ENCODE measurements at regions of chr14 and their contacts with region 1.

Region 1: DNA sequence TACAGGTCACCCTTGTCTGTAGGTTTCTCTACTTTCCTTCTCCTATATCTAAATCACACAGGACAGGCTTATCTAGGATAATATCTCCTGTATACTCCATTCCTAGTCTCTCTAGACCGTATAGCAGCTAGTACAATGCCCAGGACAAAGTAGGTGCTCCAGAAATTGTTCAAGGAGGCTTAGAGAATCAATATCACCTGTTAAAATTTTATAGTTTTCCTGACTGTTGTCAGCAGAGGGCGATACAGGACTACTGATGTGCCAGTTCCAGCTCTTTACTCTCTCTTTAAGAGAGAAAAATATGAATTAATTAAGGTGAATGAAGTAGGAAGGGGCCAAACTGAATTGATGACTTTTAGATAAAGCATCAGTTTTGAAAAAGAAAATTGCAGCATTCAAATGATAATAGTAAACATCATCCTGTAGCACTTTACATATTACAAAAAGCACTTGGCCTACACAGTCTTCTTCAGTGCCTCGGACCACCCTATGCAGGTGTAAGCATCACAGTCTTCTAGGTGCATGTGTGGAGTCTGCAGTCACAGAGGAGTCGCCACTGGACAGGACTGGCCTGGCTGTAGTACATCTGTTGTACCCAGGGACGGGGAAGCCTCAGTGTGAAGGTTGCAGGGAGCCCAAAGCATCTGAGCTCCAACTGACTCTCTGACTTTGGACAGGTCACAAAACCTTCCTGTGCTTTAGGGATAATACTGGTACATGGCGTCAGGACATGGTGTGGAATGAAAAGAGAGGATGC is 61.9 kb upstream of the MAX start:
- DNase-seq: no peak
- H3K4me3 ChIP-seq: no peak overlapping the region
- H3K27ac ChIP-seq: no peak overlapping the region
- H3K4me1 ChIP-seq: no peaks in the 10 kb centered on the region
- H3K27me3 ChIP-seq: no peaks in the 10 kb centered on the region
- CTCF ChIP-seq: peak in 2 of 3 experiments; percentile 47 to 52; a peak in 2 of 4 replicates
- EP300 ChIP-seq: no peak
- POLR2A ChIP-seq: no peak
- RAD21 ChIP-seq: peak; percentile 88

Region 2: DNA sequence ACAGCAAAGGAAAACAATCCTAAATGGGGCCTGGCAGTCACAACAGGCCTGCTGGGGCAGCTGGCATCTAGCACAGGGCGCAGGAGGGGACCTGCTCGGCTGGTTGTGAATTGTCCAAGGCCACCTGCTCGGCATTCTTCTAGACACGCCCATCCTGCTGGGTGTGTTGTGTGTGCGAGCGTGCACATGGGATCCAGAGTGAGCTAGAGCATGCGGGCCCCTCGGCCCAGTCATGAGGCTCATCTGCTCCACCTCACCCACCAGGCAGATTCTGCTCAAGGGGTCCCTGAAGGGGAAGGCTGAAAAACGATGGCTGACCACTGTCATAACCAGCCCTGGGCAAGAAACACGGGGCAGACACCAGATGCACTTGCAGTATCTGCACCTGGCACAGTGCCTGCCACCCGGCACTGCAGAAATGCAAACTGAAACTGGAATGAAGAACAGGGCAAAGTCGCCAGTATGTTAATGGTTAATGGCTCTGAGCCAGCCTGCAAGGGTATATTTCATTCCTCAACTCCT is 93.7 kb before region 1 on chr14:
- CTCF ChIA-PET with region 1: no interaction called
- POLR2A ChIA-PET with region 1: no interaction called
- DNase-seq: no peak
- H3K4me3 ChIP-seq: no peak overlapping the region
- H3K27ac ChIP-seq: no peak overlapping the region
- H3K4me1 ChIP-seq: no peaks in the 10 kb centered on the region
- H3K27me3 ChIP-seq: no peaks in the 10 kb centered on the region
- CTCF ChIP-seq: no peak
- EP300 ChIP-seq: no peak
- POLR2A ChIP-seq: no peak
- RAD21 ChIP-seq: no peak

Region 3: DNA sequence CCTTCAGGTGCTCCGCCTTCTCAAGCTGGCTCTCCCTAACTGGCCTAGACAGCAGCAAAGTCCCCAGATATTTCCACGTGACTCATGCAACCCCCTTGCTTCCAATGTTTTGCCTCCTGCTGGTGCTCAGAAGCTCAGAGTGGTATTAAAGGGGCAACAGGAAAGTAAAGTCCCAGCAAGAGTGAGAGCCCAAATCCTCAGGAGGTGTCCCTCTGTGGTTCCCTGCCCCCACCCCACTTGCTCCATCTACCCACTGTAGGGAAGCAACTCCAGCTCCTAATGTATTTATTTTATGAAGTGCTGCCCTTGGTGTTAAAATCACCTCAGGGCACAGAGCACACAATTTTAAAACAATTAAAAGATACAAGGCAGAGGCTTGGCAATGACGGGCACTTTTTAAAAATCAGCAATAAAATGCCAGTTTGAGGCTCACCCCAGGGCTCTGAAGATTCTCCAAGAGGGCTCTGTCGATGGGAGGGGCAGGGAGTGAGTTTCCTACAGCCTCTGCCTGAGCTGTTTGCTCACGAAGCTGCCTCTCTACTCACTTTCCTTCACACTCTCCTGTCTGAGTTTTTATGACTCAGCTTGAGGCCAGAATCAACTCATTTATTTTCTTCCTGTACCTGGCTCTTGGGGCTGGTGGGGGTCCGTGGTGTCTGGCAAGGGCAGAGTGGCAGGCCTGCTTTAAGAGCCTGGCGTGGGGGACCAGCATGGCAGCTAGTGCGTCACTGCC is 20.0 kb after region 1 on chr14:
- CTCF ChIA-PET with region 1: interaction called, 14 read pairs
- POLR2A ChIA-PET with region 1: no interaction called
- DNase-seq: no peak
- H3K4me3 ChIP-seq: no peak overlapping the region
- H3K27ac ChIP-seq: no peak overlapping the region
- H3K4me1 ChIP-seq: peaks cover 3 to 20% (median 11%) of the 10 kb centered on the region in 4 experiments
- H3K27me3 ChIP-seq: no peaks in the 10 kb centered on the region; a peak in 2 of 7 replicates
- CTCF ChIP-seq: no peak
- EP300 ChIP-seq: no peak
- POLR2A ChIP-seq: no peak
- RAD21 ChIP-seq: no peak

Region 4: GRCh38 chr14:65396082-65396910 is 232.1 kb after region 1 on chr14:
- CTCF ChIA-PET with region 1: no interaction called
- POLR2A ChIA-PET with region 1: no interaction called
- DNase-seq: no peak
- H3K4me3 ChIP-seq: no peak overlapping the region
- H3K27ac ChIP-seq: no peak overlapping the region
- H3K4me1 ChIP-seq: no peaks in the 10 kb centered on the region
- H3K27me3 ChIP-seq: no peaks in the 10 kb centered on the region
- CTCF ChIP-seq: no peak
- EP300 ChIP-seq: no peak
- POLR2A ChIP-seq: no peak
- RAD21 ChIP-seq: no peak

Region 5: DNA sequence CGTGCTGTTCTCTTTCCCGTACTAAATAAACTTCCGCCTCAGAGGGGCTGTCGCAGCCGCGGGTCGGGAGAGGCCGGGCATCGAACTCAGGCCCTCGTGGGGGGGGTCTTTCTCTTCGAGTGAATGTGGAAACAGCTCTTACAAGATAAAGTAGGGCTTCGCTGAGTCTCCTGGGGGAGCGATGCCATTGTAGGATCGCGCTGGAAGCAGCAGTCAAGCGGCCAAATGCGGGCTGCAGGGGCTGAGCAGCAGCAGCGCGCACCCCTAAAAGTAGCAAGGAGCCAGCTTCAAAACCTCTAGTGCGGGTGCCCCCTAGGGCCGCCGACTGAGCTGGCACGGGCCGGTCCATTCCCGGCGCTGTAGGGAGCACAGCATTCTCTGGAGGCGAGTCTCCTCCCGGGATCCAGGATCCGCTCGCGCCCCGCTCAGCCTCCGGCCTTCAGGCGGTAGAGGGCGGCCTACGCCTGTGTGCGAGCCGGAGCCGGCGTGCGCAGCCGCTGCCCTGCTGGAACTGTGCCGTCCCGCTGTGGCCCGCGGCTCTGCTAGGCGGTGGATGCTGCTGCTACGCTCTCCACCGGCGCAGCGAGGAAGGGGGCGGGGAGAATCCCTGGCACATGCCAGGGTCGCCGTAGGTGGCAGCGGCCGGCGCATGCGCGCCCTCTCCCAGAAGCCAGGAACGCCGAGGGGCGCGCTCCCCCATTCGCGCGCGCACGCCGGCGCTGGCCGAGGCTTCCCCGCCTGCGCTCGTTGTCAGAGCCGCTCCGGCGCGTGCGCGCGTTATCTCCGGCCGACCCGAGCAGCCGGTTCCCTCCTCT is 248.0 kb after region 1 on chr14 and contains the start of gene FUT8:
- CTCF ChIA-PET with region 1: interaction called, 10 read pairs
- POLR2A ChIA-PET with region 1: no interaction called
- DNase-seq: peak; percentile 93 to 96
- H3K4me3 ChIP-seq: peak within 1 kb of the TSS; percentile 71 to 85 (median 77)
- H3K27ac ChIP-seq: peak within 1 kb of the TSS; percentile 73
- H3K4me1 ChIP-seq: peaks cover 0 to 5% (median 0%) of the 10 kb centered on the region in 4 experiments; a peak in 1 of 7 replicates
- H3K27me3 ChIP-seq: no peaks in the 10 kb centered on the region; a peak in 1 of 7 replicates
- CTCF ChIP-seq: peak; percentile 64 to 78 (median 67)
- EP300 ChIP-seq: peak; percentile 5 to 73; a peak in 2 of 3 replicates
- POLR2A ChIP-seq: peak in 1 of 2 experiments; percentile 76; a peak in 2 of 3 replicates
- RAD21 ChIP-seq: peak; percentile 79 to 85
- total RNA-seq, gene FUT8: 25.1 and 25.3 TPM in 2 replicates